Naive thymus-derived CD4-positive, alpha-beta T cell (primary cell): ENCODE measurements at regions of chr20 and their contacts with region 1.

Region 1: GRCh38 chr20:24992487-24993205 is at the start of gene APMAP:
- DNase-seq: peak; percentile 88 to 97 (median 94)
- ATAC-seq: peak; percentile 96
- H3K4me3 ChIP-seq: peak within 1 kb of the TSS; percentile 90
- H3K4me3 Mint-ChIP-seq: peak within 1 kb of the TSS; percentile 88 to 96 (median 94)
- H3K27ac ChIP-seq: peak within 1 kb of the TSS; percentile 97
- H3K27ac Mint-ChIP-seq: peak within 1 kb of the TSS; percentile 93 to 98 (median 97)
- H3K4me1 ChIP-seq: peaks cover 27 to 36% of the 10 kb centered on the region in 2 donors
- H3K4me1 Mint-ChIP-seq: peaks cover 39 to 71% (median 57%) of the 10 kb centered on the region in 7 donors
- H3K27me3 ChIP-seq: no peaks in the 10 kb centered on the region
- H3K27me3 Mint-ChIP-seq: peaks cover 0 to 16% (median 0%) of the 10 kb centered on the region in 5 donors
- total RNA-seq, gene APMAP: 28.2 to 47.3 (median 38.8) TPM

Region 2: GRCh38 chr20:23350196-23350903 is 1642.3 kb before region 1 on chr20 and contains the start of gene NXT1:
- CTCF ChIA-PET with region 1: no interaction called
- POLR2A ChIA-PET with region 1: no interaction called
- intact Hi-C with region 1: loop called in 1 of 2 experiments (anchors 1 kb)
- DNase-seq: peak; percentile 92 to 98 (median 95)
- ATAC-seq: peak; percentile 91
- H3K4me3 ChIP-seq: peak within 1 kb of the TSS; percentile 99
- H3K4me3 Mint-ChIP-seq: peak within 1 kb of the TSS; percentile 84 to 100 (median 98)
- H3K27ac ChIP-seq: peak within 1 kb of the TSS; percentile 99
- H3K27ac Mint-ChIP-seq: peak within 1 kb of the TSS; percentile 98 to 100 (median 100)
- H3K4me1 ChIP-seq: peaks cover 19 to 20% of the 10 kb centered on the region in 2 donors
- H3K4me1 Mint-ChIP-seq: peaks cover 12 to 36% (median 26%) of the 10 kb centered on the region in 7 donors
- H3K27me3 ChIP-seq: no peaks in the 10 kb centered on the region
- H3K27me3 Mint-ChIP-seq: peaks cover 0 to 2% (median 0%) of the 10 kb centered on the region in 5 donors
- total RNA-seq, gene NXT1: 20.1 to 63.4 (median 39.7) TPM

Region 3: DNA sequence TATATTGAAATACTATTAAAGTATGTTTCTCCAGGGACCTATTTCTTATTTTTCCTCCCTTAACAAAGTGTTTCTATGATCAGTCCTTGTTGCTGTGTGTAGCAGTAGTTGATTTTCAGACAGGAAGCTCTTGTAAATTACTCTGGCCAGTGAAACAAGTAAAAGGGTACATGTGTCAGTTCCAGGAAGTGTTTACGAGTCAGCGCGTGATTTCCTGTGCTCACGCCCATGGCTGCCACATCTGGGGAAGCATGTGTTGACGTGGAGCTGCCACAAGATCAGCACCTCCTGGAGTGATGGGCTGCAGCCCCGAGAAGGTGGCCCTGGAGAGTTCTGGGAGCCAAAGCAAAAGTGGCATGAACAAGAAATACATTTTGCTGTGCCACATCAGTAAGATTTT is 965.4 kb before region 1 on chr20:
- CTCF ChIA-PET with region 1: no interaction called
- POLR2A ChIA-PET with region 1: no interaction called
- intact Hi-C with region 1: loop called in 1 of 2 experiments (anchors 1 kb)
- DNase-seq: peak; percentile 45 to 93 (median 87)
- ATAC-seq: peak; percentile 99
- H3K4me3 ChIP-seq: peak overlapping the region; percentile 39
- H3K4me3 Mint-ChIP-seq: peak overlapping the region; percentile 26 to 81 (median 71)
- H3K27ac ChIP-seq: peak overlapping the region; percentile 83
- H3K27ac Mint-ChIP-seq: peak overlapping the region; percentile 95 to 99 (median 97)
- H3K4me1 ChIP-seq: peaks cover 17 to 29% of the 10 kb centered on the region in 2 donors
- H3K4me1 Mint-ChIP-seq: peaks cover 20 to 76% (median 62%) of the 10 kb centered on the region in 7 donors
- H3K27me3 ChIP-seq: no peaks in the 10 kb centered on the region
- H3K27me3 Mint-ChIP-seq: no peaks in the 10 kb centered on the region

Region 4: DNA sequence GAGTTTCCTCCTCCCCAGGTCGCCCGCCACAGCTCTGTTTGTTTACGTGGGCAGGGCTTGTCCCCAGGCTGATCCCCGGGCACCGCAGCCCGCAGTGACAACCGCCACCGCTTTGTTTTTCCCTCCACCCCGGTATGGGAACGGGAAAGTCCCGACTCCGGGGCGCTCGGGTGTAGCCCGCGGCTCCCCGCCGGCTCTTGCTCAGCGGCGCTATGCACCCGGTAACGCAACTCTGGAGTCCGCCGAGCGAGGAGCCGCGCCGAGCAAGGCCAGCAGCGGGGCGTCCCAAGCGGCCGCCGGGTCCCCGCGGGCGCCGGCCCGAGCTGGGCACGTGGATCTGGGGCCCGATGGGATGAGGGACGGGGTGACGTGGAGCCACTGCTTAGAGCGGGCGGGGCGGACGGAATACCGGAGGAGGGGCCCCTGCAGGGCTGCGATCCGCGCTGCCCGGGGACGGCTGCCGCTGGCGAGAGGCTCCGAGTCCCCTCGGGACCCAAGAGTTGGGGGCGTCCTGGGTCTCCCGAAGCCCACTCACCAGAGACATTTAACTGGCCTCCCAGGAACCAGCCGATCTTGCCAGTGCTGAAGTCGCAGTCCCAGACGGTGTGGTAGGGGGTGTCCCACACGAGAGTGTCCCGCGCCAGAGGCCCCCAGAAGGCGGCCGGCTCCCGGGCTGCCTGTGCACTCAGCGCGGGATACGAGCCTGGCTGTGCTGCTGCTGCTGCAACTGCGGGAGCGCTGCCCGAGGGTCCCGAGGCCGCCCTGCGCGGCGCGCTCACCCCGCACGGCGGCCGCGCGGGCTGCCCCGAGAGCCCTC is 64.8 kb after region 1 on chr20:
- CTCF ChIA-PET with region 1: interaction called, 122 read pairs
- POLR2A ChIA-PET with region 1: interaction called, 95 read pairs
- intact Hi-C with region 1: loop called (anchors 1 kb)
- DNase-seq: peak; percentile 67 to 86 (median 74)
- ATAC-seq: peak; percentile 77
- H3K4me3 ChIP-seq: peak overlapping the region; percentile 86
- H3K4me3 Mint-ChIP-seq: peak overlapping the region; percentile 81 to 90 (median 88)
- H3K27ac ChIP-seq: peak overlapping the region; percentile 87
- H3K27ac Mint-ChIP-seq: peak overlapping the region; percentile 72 to 94 (median 88)
- H3K4me1 ChIP-seq: peaks cover 33 to 48% of the 10 kb centered on the region in 2 donors
- H3K4me1 Mint-ChIP-seq: peaks cover 38 to 63% (median 47%) of the 10 kb centered on the region in 7 donors
- H3K27me3 ChIP-seq: no peaks in the 10 kb centered on the region
- H3K27me3 Mint-ChIP-seq: peaks cover 0 to 29% (median 0%) of the 10 kb centered on the region in 5 donors

Region 5: GRCh38 chr20:25195014-25195961 is 202.6 kb after region 1 on chr20 and contains the start of gene ENTPD6:
- CTCF ChIA-PET with region 1: no interaction called
- POLR2A ChIA-PET with region 1: interaction called, 8 read pairs
- intact Hi-C with region 1: loop called (anchors 1 kb)
- DNase-seq: peak; percentile 88 to 99 (median 94)
- ATAC-seq: peak; percentile 89
- H3K4me3 ChIP-seq: peak within 1 kb of the TSS; percentile 85
- H3K4me3 Mint-ChIP-seq: peak within 1 kb of the TSS; percentile 81 to 97 (median 92)
- H3K27ac ChIP-seq: peak within 1 kb of the TSS; percentile 91
- H3K27ac Mint-ChIP-seq: peak within 1 kb of the TSS; percentile 75 to 96 (median 93)
- H3K4me1 ChIP-seq: peaks cover 19 to 29% of the 10 kb centered on the region in 2 donors
- H3K4me1 Mint-ChIP-seq: peaks cover 23 to 56% (median 44%) of the 10 kb centered on the region in 7 donors
- H3K27me3 ChIP-seq: no peaks in the 10 kb centered on the region
- H3K27me3 Mint-ChIP-seq: peaks cover 0 to 6% (median 0%) of the 10 kb centered on the region in 5 donors
- total RNA-seq, gene ENTPD6: 41.1 to 108 (median 74.4) TPM

Region 6: GRCh38 chr20:25310268-25310920 is 317.7 kb after region 1 on chr20:
- CTCF ChIA-PET with region 1: no interaction called
- POLR2A ChIA-PET with region 1: no interaction called
- intact Hi-C with region 1: loop called in 1 of 2 experiments (anchors 5 kb)
- DNase-seq: peak in 4 of 9 donors; percentile 12 to 64 (median 18)
- ATAC-seq: peak; percentile 87
- H3K4me3 ChIP-seq: peak overlapping the region; percentile 18
- H3K4me3 Mint-ChIP-seq: peak overlapping the region; percentile 8 to 88 (median 76)
- H3K27ac ChIP-seq: peak overlapping the region; percentile 31
- H3K27ac Mint-ChIP-seq: peak overlapping the region; percentile 68 to 97 (median 85)
- H3K4me1 ChIP-seq: peaks cover 3 to 8% of the 10 kb centered on the region in 2 donors
- H3K4me1 Mint-ChIP-seq: peaks cover 15 to 38% (median 20%) of the 10 kb centered on the region in 7 donors
- H3K27me3 ChIP-seq: no peaks in the 10 kb centered on the region
- H3K27me3 Mint-ChIP-seq: no peaks in the 10 kb centered on the region

Region 7: GRCh38 chr20:25623736-25624499 is 631.3 kb after region 1 on chr20 and contains the start of gene NANP:
- CTCF ChIA-PET with region 1: no interaction called
- POLR2A ChIA-PET with region 1: no interaction called
- intact Hi-C with region 1: loop called (anchors 2 to 10 kb)
- DNase-seq: peak; percentile 62 to 92 (median 73)
- ATAC-seq: peak; percentile 86
- H3K4me3 ChIP-seq: peak within 1 kb of the TSS; percentile 96
- H3K4me3 Mint-ChIP-seq: peak within 1 kb of the TSS; percentile 86 to 96 (median 94)
- H3K27ac ChIP-seq: peak within 1 kb of the TSS; percentile 70
- H3K27ac Mint-ChIP-seq: peak within 1 kb of the TSS; percentile 78 to 96 (median 90)
- H3K4me1 ChIP-seq: peaks cover 0 to 12% of the 10 kb centered on the region in 2 donors
- H3K4me1 Mint-ChIP-seq: peaks cover 14 to 34% (median 18%) of the 10 kb centered on the region in 7 donors
- H3K27me3 ChIP-seq: no peaks in the 10 kb centered on the region
- H3K27me3 Mint-ChIP-seq: peaks cover 0 to 3% (median 0%) of the 10 kb centered on the region in 5 donors
- total RNA-seq, gene NANP: 1.0 to 7.0 (median 1.9) TPM